Transverse colon (tissue), 4 donors: ENCODE measurements at regions of chr7 and their contacts with region 1.

Region 1: DNA sequence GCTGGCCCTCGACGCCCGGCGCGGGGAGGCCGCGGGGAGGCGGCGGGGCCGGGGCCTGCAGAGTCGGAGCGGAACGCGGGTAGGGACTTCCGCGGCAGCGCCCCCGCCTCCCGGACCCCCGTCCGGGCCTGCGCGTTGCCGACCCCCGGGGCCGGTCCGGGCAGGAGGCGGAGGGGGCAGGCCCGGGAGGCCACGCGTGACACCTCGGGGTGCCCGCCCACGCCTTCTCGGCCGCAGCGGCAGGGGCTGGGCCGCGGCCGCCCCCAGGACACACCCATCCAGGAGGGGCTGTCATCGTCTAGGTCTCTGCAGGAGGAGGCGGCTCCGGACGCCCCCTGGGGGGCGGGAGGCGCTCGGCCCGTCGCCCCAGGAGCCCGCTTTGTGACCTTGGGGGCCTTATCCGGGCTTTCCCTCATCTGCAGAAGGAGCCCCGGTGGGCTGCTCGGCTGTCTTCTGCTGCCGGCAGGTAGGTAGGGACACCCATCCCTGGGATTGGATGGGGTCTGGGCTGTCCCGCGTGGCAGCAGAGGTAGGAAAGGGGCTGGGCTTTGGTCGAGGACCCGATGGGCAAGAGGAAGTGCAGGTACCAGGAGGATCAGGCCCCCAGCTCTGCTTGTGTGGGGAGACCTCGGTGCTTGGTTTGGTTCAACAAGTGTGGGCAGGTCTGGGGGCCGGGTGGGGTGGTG is 569 bp downstream of the ZNF316 start:
- DNase-seq: peak; percentile 41
- H3K4me3 ChIP-seq: peak overlapping the region; percentile 63 to 96 (median 94)
- H3K27ac ChIP-seq: peak overlapping the region; percentile 59 to 76 (median 67)
- H3K4me1 ChIP-seq: peaks cover 7 to 25% (median 16%) of the 10 kb centered on the region in 4 donors
- H3K27me3 ChIP-seq: no peaks in the 10 kb centered on the region
- CTCF ChIP-seq: peak in 4 of 5 experiments; percentile 20 to 32 (median 26)
- EP300 ChIP-seq: no peak
- POLR2A ChIP-seq: no peak

Region 2: GRCh38 chr7:6614953-6615722 is 22.5 kb before region 1 on chr7 and contains the start of gene ZNF853:
- in situ Hi-C with region 1: no loop called
- intact Hi-C with region 1: no loop called
- DNase-seq: no peak
- H3K4me3 ChIP-seq: peak within 1 kb of the TSS; percentile 56 to 86 (median 66)
- H3K27ac ChIP-seq: peak within 1 kb of the TSS in 2 of 4 donors; percentile 39 to 72
- H3K4me1 ChIP-seq: peaks cover 0 to 26% (median 7%) of the 10 kb centered on the region in 4 donors
- H3K27me3 ChIP-seq: peaks cover 32% of the 10 kb centered on the region
- CTCF ChIP-seq: no peak
- EP300 ChIP-seq: no peak
- POLR2A ChIP-seq: no peak
- total RNA-seq, gene ZNF853: 2.9 to 18.7 (median 7.3) TPM

Region 3: DNA sequence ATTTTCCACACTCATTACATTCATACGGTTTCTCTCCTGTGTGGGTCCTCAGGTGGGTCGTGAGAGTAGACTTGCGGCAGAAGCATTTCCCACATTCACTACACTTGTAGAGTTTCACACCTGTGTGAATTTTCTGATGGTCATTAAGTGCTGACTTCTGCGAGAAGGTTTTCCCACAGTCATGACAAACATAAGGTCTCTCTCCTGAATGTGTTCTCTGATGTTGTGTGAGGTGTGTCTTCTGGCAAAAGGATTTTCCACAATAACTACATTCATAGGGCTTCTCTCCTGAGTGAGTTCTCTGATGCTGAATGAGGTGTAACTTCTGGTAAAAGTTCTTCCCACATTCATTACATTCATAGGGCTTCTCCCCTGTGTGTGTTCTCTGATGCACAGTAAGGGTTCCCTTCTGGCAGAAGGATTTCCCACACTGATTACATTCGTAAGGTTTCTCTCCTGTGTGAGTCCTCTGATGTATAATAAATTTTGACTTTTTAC is 54.0 kb after region 1 on chr7:
- in situ Hi-C with region 1: no loop called
- intact Hi-C with region 1: no loop called
- DNase-seq: no peak
- H3K4me3 ChIP-seq: peak overlapping the region in 1 of 4 donors; percentile 7
- H3K27ac ChIP-seq: no peak overlapping the region
- H3K4me1 ChIP-seq: no peaks in the 10 kb centered on the region
- H3K27me3 ChIP-seq: no peaks in the 10 kb centered on the region
- CTCF ChIP-seq: no peak
- EP300 ChIP-seq: no peak
- POLR2A ChIP-seq: no peak

Region 4: DNA sequence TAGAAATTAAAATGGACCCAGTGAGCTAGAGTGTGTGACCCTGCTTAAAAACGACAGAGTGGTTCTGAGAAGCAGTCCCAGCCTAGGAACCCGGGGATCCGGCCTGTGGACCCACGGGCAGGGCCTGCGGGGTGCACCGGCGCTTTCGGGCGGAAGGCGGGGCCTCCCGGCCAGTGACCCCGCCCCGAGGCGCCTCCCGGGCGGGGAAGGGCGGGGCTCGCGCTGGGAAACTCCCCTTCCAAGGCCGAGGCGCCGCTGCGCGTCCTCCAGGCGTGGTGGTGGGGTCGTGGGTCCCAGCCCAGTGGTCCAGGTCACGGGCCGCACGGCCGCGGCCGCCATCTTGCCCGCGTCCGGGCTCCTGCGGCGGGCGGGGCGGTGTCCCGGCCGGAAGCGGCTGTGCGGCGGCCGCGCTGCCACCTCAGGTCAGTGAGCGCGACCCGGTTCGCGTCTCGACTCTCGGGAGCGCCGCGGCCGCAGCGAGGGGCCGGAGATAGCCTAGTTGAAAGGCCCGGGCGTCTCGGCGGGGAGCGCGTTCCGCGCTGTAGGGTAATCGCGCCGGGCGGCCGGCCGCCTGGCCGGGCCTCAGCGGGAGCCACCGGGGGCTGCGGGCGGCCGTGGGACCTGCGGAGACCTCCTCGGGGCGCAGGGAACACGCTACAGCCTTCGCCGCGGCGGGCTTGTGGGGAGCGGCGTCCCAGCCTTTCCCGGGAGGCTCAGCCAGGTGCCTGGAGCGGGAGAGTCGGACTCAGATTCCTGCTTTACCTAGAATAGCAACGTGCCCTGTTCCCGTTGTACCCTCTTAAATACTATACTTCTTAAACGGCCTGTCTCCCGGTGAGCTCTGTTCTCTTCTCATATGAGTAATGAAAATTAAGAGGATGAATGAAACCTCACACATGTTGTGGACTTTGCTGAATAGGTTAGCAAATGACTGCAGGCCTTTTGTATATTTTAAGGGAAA is 929.2 kb after region 1 on chr7 and contains the start of gene MIOS:
- in situ Hi-C with region 1: no loop called
- intact Hi-C with region 1: loop called (anchors 5 kb)
- DNase-seq: peak; percentile 92
- H3K4me3 ChIP-seq: peak within 1 kb of the TSS; percentile 38 to 89 (median 85)
- H3K27ac ChIP-seq: peak within 1 kb of the TSS; percentile 90 to 98 (median 98)
- H3K4me1 ChIP-seq: peaks cover 12 to 43% (median 22%) of the 10 kb centered on the region in 4 donors
- H3K27me3 ChIP-seq: no peaks in the 10 kb centered on the region
- CTCF ChIP-seq: no peak
- EP300 ChIP-seq: no peak
- POLR2A ChIP-seq: peak; percentile 31
- total RNA-seq, gene MIOS: 8.4 to 41.9 (median 26.1) TPM